Mammary epithelial cell (primary cell): ENCODE measurements at regions of chr2 and their contacts with region 1.

Region 1: DNA sequence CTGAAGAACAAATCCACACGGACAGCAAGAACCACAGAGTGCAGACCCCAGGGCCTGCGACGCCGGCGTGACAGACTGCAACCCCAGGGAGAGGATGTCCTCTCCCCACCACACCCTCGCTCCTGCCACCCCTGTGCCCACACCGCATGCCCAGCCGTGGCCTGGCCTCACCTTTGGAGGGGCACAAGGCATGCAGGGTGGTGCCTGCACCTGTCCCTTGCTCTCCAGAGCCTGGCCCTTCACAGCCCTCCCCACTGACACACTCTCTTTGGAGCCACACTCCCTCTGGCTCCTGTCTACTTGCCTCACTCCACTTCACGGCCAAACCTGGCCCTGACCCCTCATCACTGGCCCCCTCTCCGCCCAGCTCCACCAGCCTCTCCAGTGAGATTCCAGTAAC is 9.3 kb downstream of the THAP4 start:
- DNase-seq: no peak
- H3K4me3 ChIP-seq: no peak overlapping the region
- H3K27ac ChIP-seq: no peak overlapping the region
- H3K4me1 ChIP-seq: no peaks in the 10 kb centered on the region
- H3K27me3 ChIP-seq: no peaks in the 10 kb centered on the region
- CTCF ChIP-seq: no peak

Region 2: DNA sequence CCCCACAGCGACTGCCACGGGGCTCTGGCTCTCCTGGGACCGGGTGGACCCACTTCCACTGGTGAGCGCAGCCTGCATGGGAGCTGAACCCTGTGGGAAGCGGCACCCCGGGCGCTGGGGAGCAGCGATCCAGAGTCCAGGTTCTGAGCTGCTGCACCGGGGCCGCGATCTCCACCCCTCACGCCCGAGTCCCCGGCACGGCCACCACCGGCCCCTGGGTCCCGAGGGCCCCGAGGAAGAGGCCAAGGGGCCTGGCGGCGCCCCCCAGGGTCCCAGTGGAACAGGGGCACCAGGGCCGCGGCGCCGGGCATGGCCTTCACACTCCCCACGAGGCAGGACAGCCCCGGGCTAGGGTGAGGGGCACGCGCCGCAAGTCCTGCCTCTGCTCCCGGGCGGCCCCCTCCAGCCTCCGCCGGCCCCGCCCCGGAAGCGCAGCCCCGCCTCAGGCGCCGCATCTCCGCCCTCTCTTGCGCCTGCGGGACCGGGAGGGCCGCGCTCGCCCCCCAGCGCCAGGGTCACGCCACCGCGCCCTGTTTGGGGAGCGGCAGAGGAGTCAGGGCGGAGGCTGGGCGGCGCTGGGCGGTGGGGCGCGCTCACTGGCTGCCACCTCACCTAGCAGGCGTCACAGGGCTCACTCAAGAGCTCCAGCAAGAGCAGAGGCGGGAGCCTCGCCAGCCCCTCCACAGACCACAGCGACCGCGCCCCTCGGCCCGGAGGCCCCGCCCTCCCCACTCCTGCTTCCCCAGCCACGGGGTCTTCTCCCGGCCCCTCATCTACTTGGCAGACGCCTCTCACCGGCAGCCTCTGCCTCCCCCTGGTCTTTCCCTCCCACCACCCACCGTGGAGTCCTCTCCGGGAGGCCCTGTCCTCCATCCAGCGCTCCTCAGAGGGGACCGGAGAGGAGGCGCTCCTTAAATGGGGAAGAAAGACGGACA is 17.5 kb before region 1 on chr2:
- CTCF ChIA-PET with region 1: no interaction called
- dilution Hi-C with region 1: no loop called
- in situ Hi-C with region 1: no loop called
- intact Hi-C with region 1: loop called (anchors 2 kb)
- DNase-seq: peak; percentile 81
- H3K4me3 ChIP-seq: peak overlapping the region; percentile 33 to 44 (median 43)
- H3K27ac ChIP-seq: peak overlapping the region; percentile 46
- H3K4me1 ChIP-seq: peaks cover 11% of the 10 kb centered on the region
- H3K27me3 ChIP-seq: no peaks in the 10 kb centered on the region
- CTCF ChIP-seq: peak; percentile 48 to 57